ENCODE measurements at regions of chr10 and their contacts with region 1.

Region 1: DNA sequence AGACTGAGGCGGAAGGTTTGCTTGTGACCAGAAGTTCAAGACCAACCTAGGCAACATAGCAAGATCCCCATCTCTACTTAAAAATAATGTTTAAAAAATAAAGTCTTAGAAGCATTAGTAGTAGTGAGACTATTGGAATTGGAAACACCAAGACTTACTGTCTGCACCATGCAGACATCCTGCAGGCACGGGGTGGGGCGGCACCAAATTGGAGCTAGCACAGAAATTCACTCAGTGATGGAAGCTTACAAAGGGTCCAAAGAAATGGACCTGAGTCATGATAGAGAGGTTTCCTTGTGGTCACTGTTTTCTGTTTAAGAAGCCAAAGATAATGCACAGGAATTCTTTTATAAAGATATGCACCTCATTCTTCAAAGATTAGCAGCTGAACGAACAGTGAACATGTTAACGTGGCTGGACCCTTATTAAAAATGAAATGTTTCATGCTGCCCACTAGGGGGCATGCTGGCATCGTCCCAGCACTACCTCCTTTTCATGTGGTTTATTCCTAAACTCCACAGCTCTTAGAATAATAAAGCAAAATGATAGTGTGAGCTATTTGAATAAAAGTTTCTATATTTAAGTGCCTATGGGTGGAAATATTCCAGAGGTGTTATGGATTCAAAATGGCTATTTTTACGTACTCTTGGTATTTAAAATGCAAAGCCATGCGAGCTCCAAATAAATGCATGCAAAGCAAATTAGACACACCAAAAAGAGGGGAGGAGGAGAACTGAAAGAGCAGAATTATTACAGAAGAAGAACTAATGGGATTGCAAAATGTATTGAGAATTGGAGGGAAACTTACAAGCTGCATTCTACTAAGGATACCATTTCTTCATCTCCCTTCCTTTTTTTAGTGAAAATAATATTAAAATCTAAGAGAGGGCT is 28.6 kb downstream of the PDSS1 start:
- DNase-seq: peak in 4 of 5 donors; percentile 48 to 53 (median 50)
- H3K4me3 ChIP-seq: no peak overlapping the region
- H3K4me3 Mint-ChIP-seq: no peak overlapping the region
- H3K27ac ChIP-seq: no peak overlapping the region
- H3K27ac Mint-ChIP-seq: peak overlapping the region in 2 of 7 donors; percentile 2 to 23
- H3K4me1 ChIP-seq: peaks cover 11% of the 10 kb centered on the region
- H3K4me1 Mint-ChIP-seq: peaks cover 8 to 14% (median 11%) of the 10 kb centered on the region in 4 donors
- H3K27me3 ChIP-seq: no peaks in the 10 kb centered on the region
- H3K27me3 Mint-ChIP-seq: no peaks in the 10 kb centered on the region

Region 2: GRCh38 chr10:26334932-26335573 is 391.0 kb before region 1 on chr10:
- CTCF ChIA-PET with region 1: interaction called, 20 read pairs
- POLR2A ChIA-PET with region 1: interaction called, 4 read pairs
- intact Hi-C with region 1: loop called (anchors 1 kb)
- DNase-seq: peak; percentile 66 to 74 (median 72)
- H3K4me3 ChIP-seq: peak overlapping the region; percentile 38 to 53
- H3K4me3 Mint-ChIP-seq: peak overlapping the region; percentile 76 to 93 (median 84)
- H3K27ac ChIP-seq: peak overlapping the region; percentile 5
- H3K27ac Mint-ChIP-seq: peak overlapping the region in 2 of 7 donors; percentile 61 to 79
- H3K4me1 ChIP-seq: peaks cover 4% of the 10 kb centered on the region
- H3K4me1 Mint-ChIP-seq: peaks cover 4 to 8% (median 6%) of the 10 kb centered on the region in 4 donors
- H3K27me3 ChIP-seq: no peaks in the 10 kb centered on the region
- H3K27me3 Mint-ChIP-seq: peaks cover 0 to 2% of the 10 kb centered on the region in 2 donors

Region 3: GRCh38 chr10:26637521-26638275 is 88.4 kb before region 1 on chr10:
- CTCF ChIA-PET with region 1: no interaction called
- POLR2A ChIA-PET with region 1: no interaction called
- intact Hi-C with region 1: no loop called
- DNase-seq: no peak
- H3K4me3 ChIP-seq: no peak overlapping the region
- H3K4me3 Mint-ChIP-seq: no peak overlapping the region
- H3K27ac ChIP-seq: no peak overlapping the region
- H3K27ac Mint-ChIP-seq: no peak overlapping the region
- H3K4me1 ChIP-seq: no peaks in the 10 kb centered on the region
- H3K4me1 Mint-ChIP-seq: no peaks in the 10 kb centered on the region
- H3K27me3 ChIP-seq: no peaks in the 10 kb centered on the region
- H3K27me3 Mint-ChIP-seq: peaks cover 4 to 13% of the 10 kb centered on the region in 2 donors

Region 4: GRCh38 chr10:26650406-26650805 is 75.7 kb before region 1 on chr10:
- CTCF ChIA-PET with region 1: no interaction called
- POLR2A ChIA-PET with region 1: no interaction called
- intact Hi-C with region 1: no loop called
- DNase-seq: no peak
- H3K4me3 ChIP-seq: no peak overlapping the region
- H3K4me3 Mint-ChIP-seq: no peak overlapping the region
- H3K27ac ChIP-seq: no peak overlapping the region
- H3K27ac Mint-ChIP-seq: no peak overlapping the region
- H3K4me1 ChIP-seq: no peaks in the 10 kb centered on the region
- H3K4me1 Mint-ChIP-seq: no peaks in the 10 kb centered on the region
- H3K27me3 ChIP-seq: no peaks in the 10 kb centered on the region
- H3K27me3 Mint-ChIP-seq: peaks cover 2 to 13% of the 10 kb centered on the region in 2 donors

Region 5: GRCh38 chr10:26697163-26697921 is 28.7 kb before region 1 on chr10 and contains the start of gene PDSS1:
- CTCF ChIA-PET with region 1: interaction called, 5 read pairs
- POLR2A ChIA-PET with region 1: interaction called, 13 read pairs
- intact Hi-C with region 1: no loop called
- DNase-seq: peak; percentile 53 to 72 (median 56)
- H3K4me3 ChIP-seq: peak within 1 kb of the TSS; percentile 37 to 81
- H3K4me3 Mint-ChIP-seq: peak within 1 kb of the TSS; percentile 86 to 98 (median 97)
- H3K27ac ChIP-seq: peak within 1 kb of the TSS; percentile 50
- H3K27ac Mint-ChIP-seq: peak within 1 kb of the TSS; percentile 88 to 96 (median 95)
- H3K4me1 ChIP-seq: peaks cover 16% of the 10 kb centered on the region
- H3K4me1 Mint-ChIP-seq: peaks cover 19 to 32% (median 28%) of the 10 kb centered on the region in 4 donors
- H3K27me3 ChIP-seq: no peaks in the 10 kb centered on the region
- H3K27me3 Mint-ChIP-seq: no peaks in the 10 kb centered on the region
- total RNA-seq, gene PDSS1: 3.1 to 3.3 TPM

Region 6: GRCh38 chr10:26739071-26739631 is 13.1 kb after region 1 on chr10:
- CTCF ChIA-PET with region 1: interaction called, 18 read pairs
- POLR2A ChIA-PET with region 1: interaction called, 5 read pairs
- intact Hi-C with region 1: no loop called
- DNase-seq: no peak
- H3K4me3 ChIP-seq: no peak overlapping the region
- H3K4me3 Mint-ChIP-seq: peak overlapping the region in 7 of 8 donors; percentile 5 to 55 (median 26)
- H3K27ac ChIP-seq: no peak overlapping the region
- H3K27ac Mint-ChIP-seq: peak overlapping the region; percentile 65 to 92 (median 81)
- H3K4me1 ChIP-seq: peaks cover 19% of the 10 kb centered on the region
- H3K4me1 Mint-ChIP-seq: peaks cover 26 to 36% (median 32%) of the 10 kb centered on the region in 4 donors
- H3K27me3 ChIP-seq: no peaks in the 10 kb centered on the region
- H3K27me3 Mint-ChIP-seq: no peaks in the 10 kb centered on the region

Region 7: GRCh38 chr10:26869528-26869927 is 143.4 kb after region 1 on chr10:
- CTCF ChIA-PET with region 1: interaction called, 19 read pairs
- POLR2A ChIA-PET with region 1: no interaction called
- intact Hi-C with region 1: no loop called
- DNase-seq: peak; percentile 10 to 39 (median 18)
- H3K4me3 ChIP-seq: no peak overlapping the region
- H3K4me3 Mint-ChIP-seq: peak overlapping the region; percentile 0 to 79 (median 60)
- H3K27ac ChIP-seq: no peak overlapping the region
- H3K27ac Mint-ChIP-seq: peak overlapping the region in 6 of 7 donors; percentile 58 to 87 (median 81)
- H3K4me1 ChIP-seq: peaks cover 8% of the 10 kb centered on the region
- H3K4me1 Mint-ChIP-seq: peaks cover 7 to 9% (median 8%) of the 10 kb centered on the region in 4 donors
- H3K27me3 ChIP-seq: no peaks in the 10 kb centered on the region
- H3K27me3 Mint-ChIP-seq: no peaks in the 10 kb centered on the region

Region 8: DNA sequence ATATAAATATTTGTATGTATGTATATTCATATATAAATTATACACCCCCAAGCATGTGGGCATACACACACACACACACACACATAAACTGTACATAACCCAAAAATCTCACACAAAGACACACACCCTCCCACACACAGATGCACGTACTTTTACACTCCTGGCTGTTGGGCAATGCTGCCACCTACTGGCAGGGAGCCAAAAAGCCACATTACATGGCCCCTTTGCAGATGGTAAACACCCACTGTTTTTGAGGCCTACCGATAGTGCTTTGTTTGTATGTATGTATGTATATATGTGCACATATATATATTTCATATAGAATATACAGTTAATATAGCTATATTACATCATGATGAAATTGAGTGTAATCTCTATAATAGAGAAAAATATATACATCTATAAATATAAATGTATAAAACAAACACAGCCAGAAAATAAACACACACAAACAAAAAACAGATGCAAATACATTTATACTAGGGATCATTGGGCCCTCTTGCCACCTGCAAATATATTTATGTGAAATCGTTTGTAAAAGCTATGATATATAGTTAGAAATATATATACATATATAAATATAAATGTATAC is 634.6 kb after region 1 on chr10:
- CTCF ChIA-PET with region 1: interaction called, 3 read pairs
- POLR2A ChIA-PET with region 1: no interaction called
- intact Hi-C with region 1: loop called (anchors 2 kb)
- DNase-seq: peak; percentile 78 to 81 (median 81)
- H3K4me3 ChIP-seq: no peak overlapping the region
- H3K4me3 Mint-ChIP-seq: no peak overlapping the region
- H3K27ac ChIP-seq: no peak overlapping the region
- H3K27ac Mint-ChIP-seq: no peak overlapping the region
- H3K4me1 ChIP-seq: no peaks in the 10 kb centered on the region
- H3K4me1 Mint-ChIP-seq: no peaks in the 10 kb centered on the region
- H3K27me3 ChIP-seq: no peaks in the 10 kb centered on the region
- H3K27me3 Mint-ChIP-seq: no peaks in the 10 kb centered on the region